H1 (cell line): ENCODE measurements at regions of chr22 and their contacts with region 1.

Region 1: GRCh38 chr22:41022470-41023298 is 69.7 kb upstream of the EP300 start:
- DNase-seq: peak; percentile 82 to 92
- H3K4me3 ChIP-seq: peak overlapping the region; percentile 35 to 79 (median 53)
- H3K27ac ChIP-seq: peak overlapping the region; percentile 95
- H3K4me1 ChIP-seq: peaks cover 0 to 11% (median 5%) of the 10 kb centered on the region in 4 experiments; a peak in 6 of 7 replicates
- H3K27me3 ChIP-seq: peaks cover 0 to 2% (median 0%) of the 10 kb centered on the region in 4 experiments; a peak in 2 of 7 replicates
- CTCF ChIP-seq: no peak
- EP300 ChIP-seq: peak in 1 of 2 experiments; percentile 70; a peak in 1 of 3 replicates
- POLR2A ChIP-seq: peak; percentile 79 to 81
- RAD21 ChIP-seq: 0 out of 4 replicates have a peak, but pooled peaks of 1 of the 2 experiments have one; percentile 1

Region 2: GRCh38 chr22:40990430-40990829 is 32.3 kb before region 1 on chr22:
- CTCF ChIA-PET with region 1: no interaction called
- POLR2A ChIA-PET with region 1: interaction called, 12 read pairs
- DNase-seq: no peak
- H3K4me3 ChIP-seq: no peak overlapping the region
- H3K27ac ChIP-seq: no peak overlapping the region
- H3K4me1 ChIP-seq: no peaks in the 10 kb centered on the region; a peak in 3 of 7 replicates
- H3K27me3 ChIP-seq: peaks cover 0 to 5% (median 0%) of the 10 kb centered on the region in 4 experiments; a peak in 1 of 7 replicates
- CTCF ChIP-seq: no peak
- EP300 ChIP-seq: no peak
- POLR2A ChIP-seq: no peak
- RAD21 ChIP-seq: no peak

Region 3: DNA sequence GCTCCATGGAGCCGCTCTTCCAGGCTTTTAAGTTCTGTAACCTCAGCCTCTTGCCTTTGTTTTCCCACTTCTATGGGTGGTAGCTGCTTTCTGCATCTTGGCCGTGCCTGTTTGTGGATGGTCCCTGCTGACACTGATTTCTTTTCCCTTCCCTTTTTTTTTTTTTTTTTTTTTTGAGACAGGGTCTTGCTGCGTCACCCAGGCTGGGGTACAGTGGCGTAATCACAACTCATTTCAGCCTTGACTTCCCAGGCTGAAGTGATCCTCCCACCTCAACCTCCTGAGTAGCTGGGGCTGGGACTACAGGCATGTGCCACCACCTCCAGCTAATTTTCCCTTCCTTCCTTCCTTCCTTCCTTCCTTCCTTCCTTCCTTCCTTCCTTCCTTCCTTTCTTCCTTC is 12.0 kb after region 1 on chr22:
- CTCF ChIA-PET with region 1: interaction called, 4 read pairs
- POLR2A ChIA-PET with region 1: interaction called, 25 read pairs
- DNase-seq: no peak
- H3K4me3 ChIP-seq: no peak overlapping the region
- H3K27ac ChIP-seq: no peak overlapping the region
- H3K4me1 ChIP-seq: peaks cover 0 to 4% (median 0%) of the 10 kb centered on the region in 4 experiments; a peak in 2 of 7 replicates
- H3K27me3 ChIP-seq: no peaks in the 10 kb centered on the region; a peak in 1 of 7 replicates
- CTCF ChIP-seq: no peak
- EP300 ChIP-seq: no peak
- POLR2A ChIP-seq: no peak
- RAD21 ChIP-seq: no peak

Region 4: DNA sequence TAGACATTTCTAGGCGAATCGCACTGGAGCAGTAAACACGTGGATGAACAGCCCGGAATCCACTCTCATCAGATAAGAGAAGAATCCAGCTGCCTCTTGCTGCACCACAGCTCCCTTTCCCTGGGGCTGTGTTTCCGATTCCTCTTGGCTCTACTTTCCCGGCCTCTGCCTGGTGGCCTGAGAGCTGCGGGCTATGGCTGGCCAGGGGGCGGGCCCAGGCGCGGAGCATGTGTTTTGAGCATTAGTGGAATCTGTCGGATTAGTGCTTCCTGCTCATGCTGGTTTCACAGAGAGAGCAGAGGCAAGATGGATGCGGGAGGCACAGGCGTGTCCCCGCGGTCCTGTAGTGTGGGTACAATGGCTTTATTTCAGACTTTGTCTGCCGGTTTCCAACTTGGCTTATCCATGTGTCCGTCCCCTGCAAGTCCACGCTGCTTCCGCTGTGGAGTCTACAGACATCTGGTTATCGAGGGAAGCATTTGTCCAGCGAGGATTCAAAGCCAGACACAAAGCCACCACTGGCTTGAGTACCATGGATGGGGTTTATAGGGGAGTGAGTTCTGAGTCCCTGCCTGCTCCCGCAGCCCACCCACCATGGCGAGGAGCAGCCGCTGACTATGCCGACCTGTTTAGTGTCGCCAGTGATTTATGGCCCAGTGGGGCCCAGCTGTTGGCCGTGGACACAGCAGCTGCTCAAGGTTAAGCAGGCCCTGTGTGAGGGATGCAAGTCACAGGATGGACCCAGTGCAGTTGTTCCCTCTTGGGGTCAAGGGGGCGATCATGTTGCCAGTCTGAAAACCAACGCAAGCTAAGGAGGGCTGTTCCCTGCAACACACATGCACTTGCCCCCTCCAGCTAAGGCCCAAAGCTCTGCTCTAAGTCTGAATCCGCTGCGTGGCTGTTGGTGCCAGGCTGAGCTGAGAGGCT is 26.4 kb after region 1 on chr22:
- CTCF ChIA-PET with region 1: interaction called, 4 read pairs
- POLR2A ChIA-PET with region 1: interaction called, 27 read pairs
- DNase-seq: peak in 1 of 2 experiments; percentile 64
- H3K4me3 ChIP-seq: no peak overlapping the region
- H3K27ac ChIP-seq: no peak overlapping the region
- H3K4me1 ChIP-seq: peaks cover 0 to 6% (median 0%) of the 10 kb centered on the region in 4 experiments; a peak in 1 of 7 replicates
- H3K27me3 ChIP-seq: no peaks in the 10 kb centered on the region
- CTCF ChIP-seq: peak in 1 of 3 experiments; percentile 5; a peak in 1 of 4 replicates
- EP300 ChIP-seq: no peak
- POLR2A ChIP-seq: no peak
- RAD21 ChIP-seq: no peak; a peak in 1 of 4 replicates

Region 5: GRCh38 chr22:41237707-41238569 is 215.3 kb after region 1 on chr22:
- CTCF ChIA-PET with region 1: no interaction called
- POLR2A ChIA-PET with region 1: interaction called, 13 read pairs
- DNase-seq: peak in 1 of 2 experiments; percentile 80
- H3K4me3 ChIP-seq: peak overlapping the region; percentile 2 to 53 (median 28); a peak in 7 of 8 replicates
- H3K27ac ChIP-seq: peak overlapping the region; percentile 37; the same call in 1 of the 2 replicates
- H3K4me1 ChIP-seq: peaks cover 4 to 17% (median 11%) of the 10 kb centered on the region in 4 experiments; a peak in 6 of 7 replicates
- H3K27me3 ChIP-seq: peaks cover 0 to 4% (median 0%) of the 10 kb centered on the region in 4 experiments; a peak in 3 of 7 replicates
- CTCF ChIP-seq: peak; percentile 76 to 85 (median 83)
- EP300 ChIP-seq: no peak
- POLR2A ChIP-seq: peak in 1 of 2 experiments; percentile 49; a peak in 1 of 3 replicates
- RAD21 ChIP-seq: peak; percentile 78 to 86